ENCODE measurements at regions of chr1 and their contacts with region 1.

Region 1: DNA sequence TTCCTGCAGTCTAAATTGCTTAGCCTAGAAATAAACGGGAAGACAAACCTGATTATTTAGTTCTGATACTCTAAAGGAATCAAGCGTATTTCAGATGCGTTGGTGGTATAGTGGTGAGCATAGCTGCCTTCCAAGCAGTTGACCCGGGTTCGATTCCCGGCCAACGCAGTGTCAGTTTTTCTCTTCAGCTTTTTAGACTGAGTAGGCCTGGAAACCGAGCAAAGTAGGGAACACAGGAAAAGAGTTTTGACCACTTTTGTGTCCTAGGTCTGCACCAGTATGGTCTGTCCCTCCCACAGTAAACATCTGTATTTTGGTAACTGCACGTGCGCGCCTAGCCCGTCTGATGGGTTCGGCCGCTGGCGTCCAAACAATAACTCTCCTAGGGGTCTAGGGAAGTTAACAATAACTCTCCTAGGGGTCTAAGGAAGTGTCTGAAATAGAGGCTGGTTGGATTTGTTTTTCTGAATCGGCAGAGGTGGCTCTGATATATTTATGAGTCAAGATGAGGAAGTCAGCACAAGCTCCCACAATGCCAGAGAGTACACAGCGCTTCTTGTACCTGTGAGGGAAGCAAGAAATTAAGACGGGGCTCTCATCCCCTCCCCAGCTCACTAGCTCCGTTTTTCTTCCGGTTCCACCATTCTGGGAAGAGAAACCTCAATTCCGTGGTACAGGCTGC is 15.6 kb upstream of the HJV start:
- DNase-seq: peak; percentile 70
- H3K4me3 Mint-ChIP-seq: peak overlapping the region; percentile 93
- H3K27ac Mint-ChIP-seq: peak overlapping the region; percentile 98
- H3K4me1 Mint-ChIP-seq: peaks cover 50% of the 10 kb centered on the region
- H3K27me3 Mint-ChIP-seq: peaks cover 24% of the 10 kb centered on the region

Region 2: GRCh38 chr1:145782166-145783099 is 254.7 kb before region 1 on chr1:
- intact Hi-C with region 1: no loop called
- DNase-seq: no peak
- H3K4me3 Mint-ChIP-seq: no peak overlapping the region
- H3K27ac Mint-ChIP-seq: peak overlapping the region; percentile 6
- H3K4me1 Mint-ChIP-seq: peaks cover 35% of the 10 kb centered on the region
- H3K27me3 Mint-ChIP-seq: no peaks in the 10 kb centered on the region

Region 3: DNA sequence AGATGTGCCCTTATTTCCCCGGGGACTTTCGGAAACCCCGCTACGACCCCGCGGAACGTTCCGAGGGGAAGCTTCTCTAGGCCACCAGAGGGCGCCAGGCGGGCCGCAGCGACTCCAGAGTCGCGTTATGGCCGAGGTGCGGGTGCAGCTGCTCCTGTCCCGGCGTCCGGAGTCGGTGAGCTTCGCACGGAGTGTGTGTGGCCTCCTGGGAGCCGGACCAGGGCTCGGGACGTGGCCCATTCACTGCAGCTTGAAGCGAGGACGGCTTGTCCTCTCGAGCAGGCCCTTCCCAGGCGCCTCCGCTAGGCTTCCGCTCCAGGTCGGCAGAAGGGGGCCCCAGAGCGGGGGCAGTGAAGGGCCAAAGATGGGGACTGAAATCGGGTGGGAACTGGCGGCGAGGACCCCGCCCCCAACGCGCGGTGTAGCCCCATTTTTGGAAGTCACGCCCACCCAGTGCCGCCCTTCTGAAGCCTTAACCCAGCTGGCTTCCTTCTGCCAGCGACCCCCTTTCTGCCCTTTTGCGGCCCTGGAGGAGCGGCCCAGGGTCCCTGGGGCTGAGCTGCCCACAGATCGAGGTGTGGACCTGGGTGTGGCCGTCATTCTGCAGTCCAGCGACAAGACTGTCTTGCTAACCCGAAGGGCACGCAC is 191.5 kb before region 1 on chr1 and contains the start of gene NUDT17:
- intact Hi-C with region 1: no loop called
- DNase-seq: peak; percentile 62
- H3K4me3 Mint-ChIP-seq: peak within 1 kb of the TSS; percentile 9
- H3K27ac Mint-ChIP-seq: peak within 1 kb of the TSS; percentile 67
- H3K4me1 Mint-ChIP-seq: peaks cover 6% of the 10 kb centered on the region
- H3K27me3 Mint-ChIP-seq: no peaks in the 10 kb centered on the region
- total RNA-seq, gene NUDT17: 3.0 TPM in 2 replicates

Region 4: GRCh38 chr1:146012737-146013403 is 24.2 kb before region 1 on chr1:
- intact Hi-C with region 1: loop called (anchors 2 kb)
- DNase-seq: peak; percentile 49
- H3K4me3 Mint-ChIP-seq: no peak overlapping the region
- H3K27ac Mint-ChIP-seq: no peak overlapping the region
- H3K4me1 Mint-ChIP-seq: peaks cover 13% of the 10 kb centered on the region
- H3K27me3 Mint-ChIP-seq: peaks cover 33% of the 10 kb centered on the region

Region 5: DNA sequence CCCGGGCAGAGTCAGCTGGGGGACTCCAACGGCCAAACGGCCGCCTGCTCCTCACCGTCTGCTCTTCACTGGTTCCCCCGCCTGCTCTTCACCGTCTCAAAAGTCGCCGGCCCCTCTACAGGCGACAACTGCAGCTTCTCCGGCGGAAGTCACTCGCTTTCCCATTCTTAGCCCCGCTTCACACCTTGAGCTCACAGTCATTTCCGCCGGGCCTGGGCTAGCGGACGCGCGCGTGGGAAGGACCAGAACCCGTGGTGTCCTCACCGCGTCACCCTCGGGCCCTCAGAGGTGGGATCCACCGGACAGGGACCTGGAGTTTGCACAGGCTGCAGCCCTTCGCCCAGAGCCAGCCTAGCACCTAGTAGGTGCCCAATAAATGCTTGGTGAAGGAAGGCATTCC is 12.3 kb after region 1 on chr1:
- intact Hi-C with region 1: loop called (anchors 1 kb)
- DNase-seq: no peak
- H3K4me3 Mint-ChIP-seq: no peak overlapping the region
- H3K27ac Mint-ChIP-seq: no peak overlapping the region
- H3K4me1 Mint-ChIP-seq: peaks cover 38% of the 10 kb centered on the region
- H3K27me3 Mint-ChIP-seq: no peaks in the 10 kb centered on the region